ENCODE measurements at regions of chr2 and their contacts with region 1.

Region 1: DNA sequence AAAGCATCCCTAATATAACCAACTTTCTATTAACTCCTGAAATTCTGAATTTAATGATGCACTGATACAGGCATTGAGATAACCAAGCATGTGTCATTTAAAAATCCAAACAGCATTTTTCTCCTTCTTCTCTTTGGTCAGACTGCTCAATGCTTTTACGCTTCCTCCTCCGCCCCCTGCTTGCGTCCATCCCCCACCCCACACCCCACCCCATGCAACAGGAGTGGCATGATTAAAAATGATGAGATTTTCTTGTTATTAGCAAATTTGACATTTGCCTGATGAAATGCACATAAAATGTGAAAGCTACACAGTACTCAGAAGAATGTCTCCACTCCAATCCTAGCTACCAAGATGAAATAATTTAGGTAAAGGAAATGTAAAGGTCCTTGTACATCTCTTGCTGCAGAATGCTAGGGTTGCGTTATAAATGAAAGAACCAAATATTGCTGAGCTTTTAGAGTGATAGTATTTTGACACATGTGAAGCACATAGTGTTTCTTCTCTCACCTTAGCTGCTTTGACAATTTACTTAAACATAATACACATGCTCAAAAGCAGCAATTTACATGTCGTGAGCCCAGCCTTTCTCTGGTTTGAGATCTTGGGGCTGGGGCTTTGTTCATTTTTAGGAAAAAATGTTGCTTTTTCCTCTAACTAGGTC is 263.8 kb downstream of the MEIS1 start:
- DNase-seq: no peak
- H3K4me3 ChIP-seq: no peak overlapping the region
- H3K27ac ChIP-seq: no peak overlapping the region
- H3K27me3 ChIP-seq: no peaks in the 10 kb centered on the region
- CTCF ChIP-seq: no peak

Region 2: DNA sequence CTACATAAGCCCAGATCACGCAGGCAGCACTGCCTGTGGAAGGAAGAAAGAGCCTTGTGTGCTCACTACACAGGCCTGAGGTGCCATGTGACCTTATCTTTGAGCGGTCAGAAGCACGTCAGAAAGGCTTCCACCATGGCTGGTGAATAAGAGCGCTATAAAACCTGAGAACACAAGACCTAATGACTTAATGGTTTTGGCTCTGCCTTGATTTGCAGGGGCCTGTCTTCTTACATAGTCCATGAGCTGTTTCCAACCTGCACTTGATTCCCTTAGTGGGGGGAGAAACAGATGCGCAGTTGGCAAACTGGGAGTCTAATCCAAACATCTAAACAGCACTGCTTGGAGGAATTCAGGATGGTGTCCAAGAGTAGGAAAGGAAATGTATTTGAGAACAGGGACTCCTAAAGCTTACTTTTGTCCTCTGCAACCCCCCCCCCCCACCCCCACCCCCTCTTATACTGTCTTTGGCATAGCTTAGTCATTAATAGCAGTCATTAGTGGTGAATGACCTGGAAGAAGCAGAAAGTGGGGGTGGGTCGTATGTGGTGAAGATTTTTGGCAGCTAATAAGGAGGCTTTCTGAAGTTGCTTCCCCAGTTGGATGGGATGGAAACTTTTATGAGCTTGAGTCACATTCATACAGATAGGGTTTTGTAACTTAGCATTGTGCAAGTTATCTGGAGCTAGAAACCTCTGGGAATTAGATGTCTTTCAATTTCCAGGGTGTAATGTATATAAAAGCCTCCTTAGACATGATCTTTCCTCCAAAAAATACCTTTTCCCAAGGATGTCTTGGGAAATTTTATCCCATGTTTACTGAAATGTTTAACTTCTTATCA is 190.3 kb after region 1 on chr2:
- CTCF ChIA-PET with region 1: no interaction called
- POLR2A ChIA-PET with region 1: no interaction called
- DNase-seq: peak; percentile 97
- H3K4me3 ChIP-seq: no peak overlapping the region
- H3K27ac ChIP-seq: peak overlapping the region; percentile 98
- H3K27me3 ChIP-seq: no peaks in the 10 kb centered on the region
- CTCF ChIP-seq: no peak

Region 3: GRCh38 chr2:67268806-67269205 is 570.1 kb after region 1 on chr2:
- CTCF ChIA-PET with region 1: interaction called, 13 read pairs
- POLR2A ChIA-PET with region 1: no interaction called
- DNase-seq: no peak
- H3K4me3 ChIP-seq: no peak overlapping the region
- H3K27ac ChIP-seq: no peak overlapping the region
- H3K27me3 ChIP-seq: no peaks in the 10 kb centered on the region
- CTCF ChIP-seq: no peak

Measured in AG04450 (cell line).